Activated T-helper 1 cell treated with anti-CD3 and anti-CD28 coated beads, Interleukin-12 subunit alpha, Interleukin-12 subunit beta, Interleukin-2, Interleukin-4 antibody, amounts not matched to agents 30 ng/mL and 10 ng/mL and 1 ng/mL, durations not matched to agents 14 hours and 24 hours and 36 hours (primary cell): ENCODE measurements at regions of chr16 and their contacts with region 1.

Region 1: GRCh38 chr16:27326738-27327585 is 13.2 kb downstream of the IL4R start:
- DNase-seq: no peak
- H3K4me3 Mint-ChIP-seq: peak overlapping the region; percentile 63
- H3K27ac Mint-ChIP-seq: peak overlapping the region; percentile 90
- H3K4me1 Mint-ChIP-seq: peaks cover 68% of the 10 kb centered on the region
- H3K27me3 Mint-ChIP-seq: no peaks in the 10 kb centered on the region

Region 2: GRCh38 chr16:27359615-27360014 is 32.7 kb after region 1 on chr16:
- intact Hi-C with region 1: loop called (anchors 2 kb)
- DNase-seq: no peak
- H3K4me3 Mint-ChIP-seq: no peak overlapping the region
- H3K27ac Mint-ChIP-seq: no peak overlapping the region
- H3K4me1 Mint-ChIP-seq: peaks cover 20% of the 10 kb centered on the region
- H3K27me3 Mint-ChIP-seq: no peaks in the 10 kb centered on the region

Region 3: DNA sequence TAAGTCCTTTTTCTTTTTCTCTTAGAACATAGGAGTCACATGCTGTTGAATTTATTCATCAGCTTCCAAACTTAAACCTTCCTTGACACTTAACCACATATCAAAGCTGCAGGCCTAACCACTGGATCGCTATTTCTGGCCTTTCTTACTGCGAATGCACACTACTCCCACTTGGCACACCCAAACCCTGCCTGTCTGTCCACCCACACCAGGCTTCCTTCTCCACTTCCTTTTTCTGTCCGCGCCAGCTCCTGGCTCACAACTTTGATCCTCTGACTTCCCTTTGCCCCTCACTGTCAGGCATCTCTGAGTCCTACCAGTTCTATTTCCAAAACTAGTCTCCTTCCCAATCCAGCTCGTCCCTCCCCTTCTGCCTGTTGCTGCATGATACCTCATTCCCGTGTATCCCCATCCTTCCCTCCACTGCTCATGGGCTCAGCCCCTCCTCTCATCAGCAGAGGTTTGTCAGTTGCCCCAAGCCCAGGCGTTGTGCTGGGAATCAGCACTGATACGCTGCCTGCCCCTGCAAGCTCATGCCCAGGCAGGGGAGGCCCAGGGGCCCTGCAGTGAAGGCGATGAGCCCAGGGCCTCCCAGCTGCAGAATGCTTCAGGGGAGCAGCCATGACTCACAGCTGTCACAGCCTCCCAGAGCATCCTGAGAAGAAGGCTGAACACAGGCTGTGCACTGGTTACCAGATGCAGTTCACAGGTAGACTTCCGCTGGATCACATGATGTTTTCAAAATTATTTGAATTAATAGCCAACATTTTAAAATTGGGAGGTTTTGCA is 402.7 kb after region 1 on chr16:
- intact Hi-C with region 1: loop called (anchors 10 kb)
- DNase-seq: no peak
- H3K4me3 Mint-ChIP-seq: no peak overlapping the region
- H3K27ac Mint-ChIP-seq: no peak overlapping the region
- H3K4me1 Mint-ChIP-seq: peaks cover 9% of the 10 kb centered on the region
- H3K27me3 Mint-ChIP-seq: no peaks in the 10 kb centered on the region